ENCODE measurements at regions of chr13 and their contacts with region 1.

Region 1: GRCh38 chr13:48155848-48156247 is 60.9 kb upstream of the MED4 start:
- DNase-seq: peak in 6 of 9 experiments; percentile 14 to 90 (median 46)
- ATAC-seq: peak; percentile 71
- H3K4me3 ChIP-seq: peak overlapping the region in 1 of 2 experiments; percentile 37
- H3K4me3 Mint-ChIP-seq: peak overlapping the region; percentile 44
- H3K27ac ChIP-seq: peak overlapping the region; percentile 61 to 89
- H3K27ac Mint-ChIP-seq: peak overlapping the region; percentile 96
- H3K4me1 ChIP-seq: peaks cover 75% of the 10 kb centered on the region
- H3K4me1 Mint-ChIP-seq: peaks cover 81% of the 10 kb centered on the region
- H3K27me3 ChIP-seq: no peaks in the 10 kb centered on the region
- H3K27me3 Mint-ChIP-seq: no peaks in the 10 kb centered on the region
- CTCF ChIP-seq: no peak

Region 2: DNA sequence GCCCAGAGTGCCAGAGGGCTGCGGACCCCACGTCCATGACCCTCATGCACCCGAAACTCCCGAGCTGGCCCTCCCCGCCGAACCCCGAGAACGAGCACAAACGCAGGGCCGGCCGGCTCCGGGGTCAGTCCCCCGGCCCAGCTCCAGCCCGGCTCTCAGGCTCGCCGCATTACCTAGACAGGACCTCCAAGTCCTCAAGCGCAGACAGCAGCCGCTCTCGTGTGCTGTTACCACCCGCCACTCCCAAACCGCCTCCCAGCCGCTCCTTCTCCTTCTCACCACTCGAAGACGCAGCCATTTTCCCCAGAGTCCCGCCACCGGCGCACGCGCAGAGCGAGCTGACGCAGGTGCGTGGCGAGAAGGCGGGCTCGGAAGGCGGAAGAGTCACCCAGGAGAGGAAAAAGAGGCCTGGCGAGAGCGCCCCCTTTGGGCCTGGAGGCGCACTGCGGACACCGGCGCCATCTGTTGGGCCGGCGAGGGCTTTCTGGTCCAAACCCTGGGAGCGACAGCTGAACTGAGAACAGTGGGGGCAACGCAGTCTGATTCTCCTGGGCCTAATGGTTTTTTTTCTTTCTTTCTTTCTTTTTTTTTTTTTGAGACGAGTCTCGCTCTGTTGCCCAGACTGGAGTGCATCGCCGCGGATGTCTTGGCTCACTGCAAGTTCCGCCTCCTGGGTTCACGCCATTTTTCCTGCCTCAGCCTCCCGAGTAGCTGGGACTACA is 60.9 kb before region 1 on chr13 and contains the start of gene MED4:
- CTCF ChIA-PET with region 1: interaction called, 3 read pairs
- POLR2A ChIA-PET with region 1: no interaction called
- intact Hi-C with region 1: loop called in 1 of 2 experiments (anchors 5 kb)
- DNase-seq: peak; percentile 96 to 99 (median 97)
- ATAC-seq: peak; percentile 98
- H3K4me3 ChIP-seq: peak within 1 kb of the TSS; percentile 90 to 96
- H3K4me3 Mint-ChIP-seq: peak within 1 kb of the TSS; percentile 96
- H3K27ac ChIP-seq: peak within 1 kb of the TSS; percentile 90 to 92
- H3K27ac Mint-ChIP-seq: peak within 1 kb of the TSS; percentile 97
- H3K4me1 ChIP-seq: peaks cover 21% of the 10 kb centered on the region
- H3K4me1 Mint-ChIP-seq: peaks cover 45% of the 10 kb centered on the region
- H3K27me3 ChIP-seq: no peaks in the 10 kb centered on the region
- H3K27me3 Mint-ChIP-seq: no peaks in the 10 kb centered on the region
- CTCF ChIP-seq: peak; percentile 100
- total RNA-seq, gene MED4: 60.8 to 63.6 TPM

Region 3: DNA sequence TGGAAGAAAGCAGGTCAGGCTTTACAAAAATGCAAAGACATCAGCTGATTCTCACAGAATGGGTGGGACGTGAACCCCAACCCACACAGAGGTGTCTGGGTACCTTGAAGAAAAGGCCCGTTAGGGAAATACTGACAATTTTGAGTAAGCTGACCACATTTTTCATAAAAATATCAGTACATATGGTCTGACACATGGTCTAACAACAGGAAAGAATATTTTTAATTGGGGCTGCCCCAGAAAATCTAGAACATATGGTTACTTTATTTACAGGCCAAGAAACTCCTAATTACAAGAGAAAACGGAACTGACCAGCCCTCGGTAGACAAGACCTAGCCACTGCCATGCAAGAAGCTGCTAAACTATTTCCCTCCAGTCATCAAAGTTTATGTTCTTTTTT is 28.4 kb after region 1 on chr13:
- CTCF ChIA-PET with region 1: interaction called, 4 read pairs
- POLR2A ChIA-PET with region 1: interaction called, 11 read pairs
- intact Hi-C with region 1: loop called (anchors 1 to 2 kb)
- DNase-seq: no peak
- ATAC-seq: no peak
- H3K4me3 ChIP-seq: peak overlapping the region in 1 of 2 experiments; percentile 5
- H3K4me3 Mint-ChIP-seq: peak overlapping the region; percentile 26
- H3K27ac ChIP-seq: peak overlapping the region in 1 of 2 experiments; percentile 79
- H3K27ac Mint-ChIP-seq: peak overlapping the region; percentile 97
- H3K4me1 ChIP-seq: peaks cover 68% of the 10 kb centered on the region
- H3K4me1 Mint-ChIP-seq: peaks cover 64% of the 10 kb centered on the region
- H3K27me3 ChIP-seq: no peaks in the 10 kb centered on the region
- H3K27me3 Mint-ChIP-seq: no peaks in the 10 kb centered on the region
- CTCF ChIP-seq: no peak

Region 4: GRCh38 chr13:48222358-48223301 is 66.8 kb after region 1 on chr13:
- CTCF ChIA-PET with region 1: interaction called, 4 read pairs
- POLR2A ChIA-PET with region 1: interaction called, 23 read pairs
- intact Hi-C with region 1: loop called in 1 of 2 experiments (anchors 1 kb)
- DNase-seq: peak in 1 of 9 experiments; percentile 27
- ATAC-seq: peak; percentile 35
- H3K4me3 ChIP-seq: peak overlapping the region in 1 of 2 experiments; percentile 42
- H3K4me3 Mint-ChIP-seq: peak overlapping the region; percentile 73
- H3K27ac ChIP-seq: peak overlapping the region; percentile 29 to 86
- H3K27ac Mint-ChIP-seq: peak overlapping the region; percentile 91
- H3K4me1 ChIP-seq: peaks cover 54% of the 10 kb centered on the region
- H3K4me1 Mint-ChIP-seq: peaks cover 65% of the 10 kb centered on the region
- H3K27me3 ChIP-seq: no peaks in the 10 kb centered on the region
- H3K27me3 Mint-ChIP-seq: no peaks in the 10 kb centered on the region
- CTCF ChIP-seq: no peak

Region 5: DNA sequence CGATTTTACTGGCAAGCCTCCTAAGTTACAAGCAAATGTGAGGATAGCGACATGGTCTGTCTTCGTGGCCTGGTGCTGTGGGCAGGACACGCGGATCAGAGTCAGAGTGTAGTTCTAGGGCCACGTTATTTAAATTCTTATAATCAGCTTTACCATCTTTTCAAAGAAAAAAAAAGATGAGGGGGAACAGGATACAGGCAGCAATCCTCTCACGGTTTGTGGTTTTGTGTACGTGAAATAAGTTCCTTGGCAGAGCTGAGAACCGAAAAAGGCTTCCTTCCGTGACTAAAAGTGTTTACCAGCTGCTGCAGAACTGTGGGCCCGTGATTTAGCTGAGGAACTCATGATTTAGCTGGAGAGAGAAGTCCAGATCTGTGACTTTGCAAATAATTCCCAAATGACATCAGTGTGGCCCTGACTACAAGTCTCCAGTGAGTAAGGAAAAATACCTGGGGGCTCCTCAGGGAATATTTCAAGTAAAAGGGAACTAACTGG is 349.8 kb after region 1 on chr13:
- CTCF ChIA-PET with region 1: no interaction called
- POLR2A ChIA-PET with region 1: no interaction called
- intact Hi-C with region 1: loop called in 1 of 2 experiments (anchors 10 kb)
- DNase-seq: peak in 8 of 9 experiments; percentile 36 to 92 (median 58)
- ATAC-seq: peak; percentile 92
- H3K4me3 ChIP-seq: no peak overlapping the region
- H3K4me3 Mint-ChIP-seq: peak overlapping the region; percentile 65
- H3K27ac ChIP-seq: peak overlapping the region; percentile 36 to 76
- H3K27ac Mint-ChIP-seq: peak overlapping the region; percentile 89
- H3K4me1 ChIP-seq: peaks cover 29% of the 10 kb centered on the region
- H3K4me1 Mint-ChIP-seq: peaks cover 51% of the 10 kb centered on the region
- H3K27me3 ChIP-seq: no peaks in the 10 kb centered on the region
- H3K27me3 Mint-ChIP-seq: no peaks in the 10 kb centered on the region
- CTCF ChIP-seq: no peak

Measured in CD8-positive, alpha-beta T cell (primary cell).